B cell (primary cell): ENCODE measurements at regions of chr18 and their contacts with region 1.

Region 1: GRCh38 chr18:13137670-13138419 is 80.7 kb upstream of the LDLRAD4 start:
- DNase-seq: peak; percentile 85
- ATAC-seq: peak; percentile 90
- H3K4me3 ChIP-seq: peak overlapping the region; percentile 58 to 98 (median 84)
- H3K4me3 Mint-ChIP-seq: peak overlapping the region; percentile 100
- H3K27ac ChIP-seq: peak overlapping the region; percentile 65 to 86
- H3K27ac Mint-ChIP-seq: peak overlapping the region; percentile 99
- H3K4me1 ChIP-seq: peaks cover 6 to 11% of the 10 kb centered on the region in 2 donors
- H3K4me1 Mint-ChIP-seq: peaks cover 24% of the 10 kb centered on the region
- H3K27me3 ChIP-seq: no peaks in the 10 kb centered on the region
- H3K27me3 Mint-ChIP-seq: no peaks in the 10 kb centered on the region
- CTCF ChIP-seq: no peak

Region 2: DNA sequence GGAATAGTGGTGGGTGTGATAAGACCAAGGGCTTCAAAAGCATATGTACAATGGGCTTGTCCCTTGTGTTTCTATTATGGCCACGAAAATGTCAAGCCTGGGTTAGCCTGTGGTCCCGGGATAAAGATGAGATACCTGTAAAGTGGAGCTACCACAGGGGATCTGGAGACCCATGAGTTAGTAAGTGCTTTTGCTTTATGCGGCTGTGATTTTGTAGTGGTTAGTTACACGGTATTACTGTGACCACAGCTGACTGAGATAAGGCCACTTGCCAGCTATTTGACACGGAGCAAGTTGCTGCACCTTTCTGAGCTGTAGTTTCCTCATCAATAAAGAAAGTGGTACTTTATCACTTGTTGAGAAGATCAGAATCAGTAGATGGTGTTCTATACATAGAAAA is 630.8 kb before region 1 on chr18:
- CTCF ChIA-PET with region 1: no interaction called
- POLR2A ChIA-PET with region 1: no interaction called
- intact Hi-C with region 1: no loop called
- DNase-seq: no peak
- ATAC-seq: no peak
- H3K4me3 ChIP-seq: no peak overlapping the region
- H3K4me3 Mint-ChIP-seq: no peak overlapping the region
- H3K27ac ChIP-seq: no peak overlapping the region
- H3K27ac Mint-ChIP-seq: no peak overlapping the region
- H3K4me1 ChIP-seq: no peaks in the 10 kb centered on the region
- H3K4me1 Mint-ChIP-seq: no peaks in the 10 kb centered on the region
- H3K27me3 ChIP-seq: no peaks in the 10 kb centered on the region
- H3K27me3 Mint-ChIP-seq: no peaks in the 10 kb centered on the region
- CTCF ChIP-seq: no peak

Region 3: DNA sequence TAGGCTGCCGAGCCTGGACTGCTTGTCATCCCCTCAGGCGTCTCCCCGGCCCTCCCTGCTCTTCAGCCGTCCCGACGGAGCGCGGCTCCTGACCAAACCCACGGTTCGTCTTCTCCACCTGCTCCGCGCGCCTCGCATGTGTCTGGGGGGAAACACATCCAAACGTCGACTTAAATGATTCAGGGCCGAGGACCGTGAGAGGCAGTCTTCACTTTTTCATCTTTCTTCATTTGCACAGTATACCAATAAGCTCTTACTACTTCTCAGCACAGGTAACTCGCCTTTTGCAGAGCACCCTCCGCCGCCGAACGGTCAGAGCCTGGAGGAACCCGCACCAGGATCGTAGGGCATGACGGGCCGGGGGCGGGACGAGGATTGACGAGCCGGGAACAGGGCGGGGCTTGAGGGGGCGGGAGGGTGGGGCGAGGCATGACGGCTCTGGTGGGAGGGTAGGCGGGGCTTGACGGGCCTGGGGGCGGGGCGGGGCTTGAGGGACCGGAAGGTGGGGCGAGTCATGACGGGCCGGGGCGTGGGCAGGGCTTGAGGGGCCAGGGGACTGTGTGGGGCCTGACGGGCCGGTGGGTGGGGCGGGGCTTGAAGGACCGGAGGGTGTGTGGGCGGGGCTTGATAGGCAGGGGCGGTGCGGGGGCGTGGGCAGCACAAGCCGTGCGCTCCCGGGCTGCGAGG is 190.3 kb before region 1 on chr18 and contains the start of gene SEH1L:
- CTCF ChIA-PET with region 1: no interaction called
- POLR2A ChIA-PET with region 1: interaction called, 4 read pairs
- intact Hi-C with region 1: loop called (anchors 1 kb)
- DNase-seq: no peak
- ATAC-seq: peak; percentile 91
- H3K4me3 ChIP-seq: peak within 1 kb of the TSS; percentile 69 to 97 (median 75)
- H3K4me3 Mint-ChIP-seq: peak within 1 kb of the TSS; percentile 96
- H3K27ac ChIP-seq: peak within 1 kb of the TSS; percentile 88 to 89
- H3K27ac Mint-ChIP-seq: peak within 1 kb of the TSS; percentile 94
- H3K4me1 ChIP-seq: peaks cover 5 to 22% of the 10 kb centered on the region in 2 donors
- H3K4me1 Mint-ChIP-seq: peaks cover 29% of the 10 kb centered on the region
- H3K27me3 ChIP-seq: no peaks in the 10 kb centered on the region
- H3K27me3 Mint-ChIP-seq: no peaks in the 10 kb centered on the region
- CTCF ChIP-seq: no peak
- total RNA-seq, gene SEH1L: 46.4 and 48.1 TPM in 2 replicates

Region 4: DNA sequence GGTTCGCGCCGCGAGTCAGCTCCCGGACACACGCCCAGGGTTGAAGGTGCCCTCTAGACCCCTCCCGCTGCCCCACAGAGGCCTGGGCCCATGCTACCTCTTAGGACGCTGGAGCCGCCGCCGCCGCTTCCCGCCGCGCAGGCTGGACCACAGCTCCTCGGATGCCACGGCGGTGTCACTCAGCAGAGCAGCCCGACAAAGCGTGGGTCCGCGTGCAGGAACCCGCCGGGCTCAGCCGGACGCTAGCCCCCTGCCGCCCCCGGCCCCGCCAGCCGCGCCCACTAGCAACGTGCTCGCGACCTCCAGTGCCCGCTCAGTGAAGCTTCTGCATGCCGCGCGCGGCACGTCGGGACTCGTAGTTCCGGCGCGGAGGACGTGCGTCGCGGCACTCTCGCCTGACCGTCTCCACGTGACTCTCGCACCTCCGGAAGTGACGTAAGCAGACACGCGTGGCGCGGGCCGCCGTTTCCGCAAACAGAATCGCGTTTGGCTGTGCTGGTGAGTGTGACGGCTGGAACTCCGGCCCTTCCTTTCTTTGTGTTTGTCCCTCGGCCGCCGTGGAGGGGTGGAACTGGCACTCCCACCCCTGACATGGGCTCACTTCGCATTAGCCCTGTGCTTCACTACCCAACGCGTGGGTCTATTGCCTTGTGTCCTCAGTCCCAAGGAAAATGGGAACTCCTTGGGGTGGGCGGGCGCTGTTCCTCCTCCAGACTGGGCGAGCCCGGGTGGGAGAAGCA is 588.6 kb after region 1 on chr18 and contains the starts of genes FAM210A and RNMT:
- CTCF ChIA-PET with region 1: no interaction called
- POLR2A ChIA-PET with region 1: no interaction called
- intact Hi-C with region 1: loop called (anchors 1 kb)
- DNase-seq: peak; percentile 97
- ATAC-seq: peak; percentile 95
- H3K4me3 ChIP-seq: peak within 1 kb of the TSS; percentile 51 to 94 (median 88)
- H3K4me3 Mint-ChIP-seq: peak within 1 kb of the TSS; percentile 97
- H3K27ac ChIP-seq: peak within 1 kb of the TSS; percentile 83 to 94
- H3K27ac Mint-ChIP-seq: peak within 1 kb of the TSS; percentile 98
- H3K4me1 ChIP-seq: peaks cover 21 to 26% of the 10 kb centered on the region in 2 donors
- H3K4me1 Mint-ChIP-seq: peaks cover 48% of the 10 kb centered on the region
- H3K27me3 ChIP-seq: no peaks in the 10 kb centered on the region
- H3K27me3 Mint-ChIP-seq: no peaks in the 10 kb centered on the region
- CTCF ChIP-seq: peak; percentile 18
- total RNA-seq, gene FAM210A: 11.4 and 12.3 TPM in 2 replicates
- total RNA-seq, gene RNMT: 54.3 and 57.8 TPM in 2 replicates